ENCODE measurements at regions of chr10 and their contacts with region 1.

Region 1: DNA sequence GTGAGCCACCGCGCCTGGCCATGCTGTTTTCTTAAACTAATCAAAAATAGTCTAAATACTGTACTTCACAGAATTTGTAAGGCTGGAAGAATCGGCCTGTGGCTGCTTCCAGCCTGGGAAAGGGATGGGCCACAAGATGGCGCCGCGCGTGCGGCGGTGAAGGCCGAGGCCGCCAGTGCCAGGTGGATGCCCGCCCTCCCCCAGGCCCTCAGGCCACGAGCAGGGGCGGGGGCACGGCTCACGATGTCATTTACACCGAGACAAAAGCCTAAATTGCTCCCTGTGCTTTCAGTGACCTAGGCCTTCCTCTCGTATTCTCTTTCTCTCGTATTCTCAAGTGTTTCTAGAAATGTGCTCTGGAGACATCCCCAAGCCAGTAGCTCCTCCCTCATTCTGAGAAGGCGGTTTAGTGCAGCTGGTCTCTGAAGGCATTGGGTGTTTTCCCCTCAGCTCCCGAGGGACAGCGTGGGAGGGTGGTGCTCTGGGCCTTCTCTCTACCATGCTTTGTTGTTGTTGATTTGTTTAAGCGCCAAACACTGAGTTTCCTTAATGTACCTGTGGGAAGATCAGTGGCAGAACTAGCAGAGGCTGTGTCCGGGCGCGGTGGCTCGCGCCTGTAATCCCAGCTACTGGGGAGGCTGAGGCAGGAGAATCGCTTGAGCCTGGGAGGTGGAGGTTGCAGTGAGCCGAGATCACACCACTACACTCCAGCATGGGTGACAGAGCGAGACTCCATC is 68.4 kb downstream of the CDC123 start:
- DNase-seq: peak; percentile 85
- H3K4me3 ChIP-seq: peak overlapping the region; percentile 15 to 45 (median 40)
- H3K27ac ChIP-seq: peak overlapping the region; percentile 53 to 77 (median 73)
- H3K4me1 ChIP-seq: peaks cover 0 to 16% (median 5%) of the 10 kb centered on the region in 4 donors
- H3K27me3 ChIP-seq: no peaks in the 10 kb centered on the region
- CTCF ChIP-seq: peak; percentile 74 to 91 (median 78)
- EP300 ChIP-seq: no peak
- POLR2A ChIP-seq: no peak

Region 2: DNA sequence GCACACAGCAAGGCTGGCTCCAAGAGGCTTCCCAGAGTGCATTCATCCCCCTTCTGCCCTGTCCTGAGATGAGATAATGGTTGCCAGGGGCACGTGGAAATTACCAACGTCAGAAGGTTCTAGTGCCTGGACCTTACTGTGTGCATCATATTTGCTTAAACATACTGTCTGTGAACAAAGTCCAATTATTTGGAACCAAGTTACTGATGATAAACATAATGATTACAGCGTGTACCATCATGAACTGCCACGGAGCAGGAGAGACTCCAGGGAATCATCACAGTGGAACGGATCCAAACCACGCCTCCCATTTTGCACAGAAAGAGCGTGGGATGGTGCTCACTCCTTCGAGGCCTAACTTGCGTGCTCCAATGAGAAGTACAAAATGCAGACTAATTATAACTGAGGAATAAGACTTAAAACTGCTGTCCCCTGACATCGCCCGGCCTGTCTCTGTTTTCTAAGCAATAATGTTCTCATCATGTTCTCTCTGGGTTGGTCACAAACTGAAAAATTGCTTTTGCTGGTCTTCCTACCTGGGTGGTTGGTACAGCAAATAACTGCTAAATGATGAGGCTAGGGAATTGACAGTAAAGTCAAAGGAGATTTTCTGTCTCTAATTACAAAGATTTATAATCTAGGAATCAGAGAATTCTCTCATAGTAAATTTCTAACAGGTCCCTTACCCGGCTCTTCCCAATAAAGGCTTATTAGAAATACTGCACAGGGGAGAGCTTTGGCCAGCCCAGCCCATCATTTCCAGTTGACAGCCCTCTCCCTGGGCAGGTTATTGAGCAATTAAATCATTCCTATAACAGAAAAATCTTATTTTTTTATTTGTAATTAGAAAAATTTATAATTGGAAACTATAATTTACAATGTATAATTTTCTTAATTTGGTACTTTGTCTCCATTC is 267.2 kb after region 1 on chr10:
- intact Hi-C with region 1: loop called (anchors 10 kb)
- DNase-seq: peak; percentile 76
- H3K4me3 ChIP-seq: no peak overlapping the region
- H3K27ac ChIP-seq: peak overlapping the region in 3 of 4 donors; percentile 59 to 77 (median 74)
- H3K4me1 ChIP-seq: peaks cover 0 to 26% (median 14%) of the 10 kb centered on the region in 4 donors
- H3K27me3 ChIP-seq: no peaks in the 10 kb centered on the region
- CTCF ChIP-seq: no peak
- EP300 ChIP-seq: peak in 2 of 4 donors; percentile 39 to 88
- POLR2A ChIP-seq: no peak

Region 3: GRCh38 chr10:12656518-12657142 is 392.3 kb after region 1 on chr10:
- intact Hi-C with region 1: loop called (anchors 2 kb)
- DNase-seq: no peak
- H3K4me3 ChIP-seq: no peak overlapping the region
- H3K27ac ChIP-seq: no peak overlapping the region
- H3K4me1 ChIP-seq: no peaks in the 10 kb centered on the region
- H3K27me3 ChIP-seq: no peaks in the 10 kb centered on the region
- CTCF ChIP-seq: peak; percentile 40 to 70 (median 54)
- EP300 ChIP-seq: no peak
- POLR2A ChIP-seq: no peak

Region 4: DNA sequence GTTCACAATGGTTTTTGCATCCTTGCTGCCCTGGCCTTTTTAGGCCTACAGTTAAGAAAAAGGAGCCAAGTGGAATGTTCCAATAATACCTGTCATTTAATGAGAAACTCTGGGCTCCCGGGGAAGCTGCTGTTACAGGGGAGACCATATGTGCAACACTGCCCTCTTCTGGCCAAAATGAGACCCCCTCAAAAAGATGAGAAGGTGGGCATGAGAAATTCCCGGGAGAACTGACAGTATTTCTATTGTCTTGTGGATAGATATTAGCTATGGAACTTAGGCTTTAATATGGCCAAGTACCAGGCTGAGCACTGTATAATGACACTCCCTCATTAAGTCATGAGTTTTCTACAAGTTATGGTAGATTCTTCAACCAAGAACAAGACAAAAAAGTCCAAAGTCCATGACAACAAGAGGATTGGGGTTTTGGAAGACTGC is 637.8 kb after region 1 on chr10:
- intact Hi-C with region 1: loop called (anchors 5 kb)
- DNase-seq: no peak
- H3K4me3 ChIP-seq: no peak overlapping the region
- H3K27ac ChIP-seq: no peak overlapping the region
- H3K4me1 ChIP-seq: no peaks in the 10 kb centered on the region
- H3K27me3 ChIP-seq: no peaks in the 10 kb centered on the region
- CTCF ChIP-seq: peak; percentile 28 to 83 (median 74)
- EP300 ChIP-seq: no peak
- POLR2A ChIP-seq: no peak

Measured in sigmoid colon (tissue), 7 donors.